HEK293T (cell line): ENCODE measurements at regions of chr13 and their contacts with region 1.

Region 1: GRCh38 chr13:29923554-29924481 is 73.4 kb upstream of the UBL3 start:
- DNase-seq: peak; percentile 81

Region 2: DNA sequence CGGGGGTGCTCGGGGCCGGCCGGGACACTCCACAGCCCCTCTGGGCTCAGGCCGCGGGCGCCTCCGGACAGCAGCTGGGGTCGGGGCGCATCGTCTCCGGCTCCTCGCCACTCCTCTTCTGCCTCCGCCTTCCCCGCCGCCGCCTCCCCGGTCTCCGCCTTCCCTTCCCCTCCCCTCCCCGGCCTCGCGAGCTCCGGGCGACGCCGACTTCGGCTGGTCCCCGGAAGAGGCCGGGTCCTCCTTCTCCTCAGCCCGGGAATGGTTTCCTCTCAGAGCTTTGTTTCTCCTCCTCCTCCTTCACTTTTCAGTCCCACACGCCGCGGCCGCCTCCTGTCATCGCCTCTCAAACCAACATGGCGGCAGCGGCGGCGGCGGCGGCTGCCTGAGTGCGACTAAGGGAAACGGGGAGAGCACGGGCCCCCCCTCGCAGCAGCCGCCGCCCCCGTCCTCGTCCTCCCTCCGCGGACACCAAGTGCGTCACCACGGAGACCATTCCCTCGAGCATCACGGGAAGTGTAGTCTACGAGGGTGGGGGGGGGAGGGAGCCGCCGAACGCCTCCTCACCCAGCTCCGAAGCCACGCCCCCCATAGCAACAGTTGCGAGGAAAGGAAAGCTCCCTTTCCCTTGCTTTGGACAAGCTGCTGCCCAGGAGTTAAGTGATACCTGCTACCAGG is 73.5 kb before region 1 on chr13 and contains the start of gene UBL3:
- CTCF ChIA-PET with region 1: interaction called, 11 read pairs
- POLR2A ChIA-PET with region 1: interaction called, 16 read pairs
- DNase-seq: peak; percentile 95

Region 3: GRCh38 chr13:29911781-29912418 is 11.9 kb before region 1 on chr13:
- CTCF ChIA-PET with region 1: interaction called, 17 read pairs
- POLR2A ChIA-PET with region 1: interaction called, 5 read pairs
- DNase-seq: no peak

Region 4: DNA sequence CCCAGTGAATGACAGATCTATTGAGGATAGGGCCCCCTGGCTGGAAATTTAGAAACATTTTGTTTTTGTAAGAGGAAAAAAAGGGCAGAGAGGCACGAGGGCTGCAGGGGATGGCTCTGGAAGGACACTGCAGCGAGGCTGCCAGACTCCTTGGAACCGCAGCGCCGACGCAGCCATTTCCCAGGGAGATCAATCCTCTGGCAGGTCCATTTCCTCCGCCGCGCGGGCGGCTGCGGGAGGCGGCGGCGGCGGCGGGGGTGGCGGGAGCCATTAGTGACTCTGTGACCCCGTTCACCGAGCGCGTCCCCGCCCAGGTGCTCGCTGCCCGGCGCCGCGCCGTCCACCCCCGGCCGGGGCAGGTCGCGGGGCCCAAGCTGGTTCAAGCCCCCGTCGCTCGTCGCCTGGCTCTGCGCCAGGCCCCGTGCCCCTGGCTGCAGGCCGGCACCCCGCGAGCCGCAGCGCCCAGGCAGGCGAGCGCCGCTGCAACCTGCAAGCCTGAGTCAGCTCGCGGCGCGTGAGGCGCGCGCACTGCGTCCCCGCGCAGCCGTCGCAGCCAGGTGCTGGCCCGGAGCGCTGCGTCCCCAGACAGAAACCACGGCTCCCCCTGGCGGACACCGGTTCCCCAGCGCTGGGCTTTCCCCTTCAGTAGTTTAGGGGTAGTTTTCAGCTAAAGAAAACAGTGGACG is 190.9 kb after region 1 on chr13:
- CTCF ChIA-PET with region 1: interaction called, 11 read pairs
- POLR2A ChIA-PET with region 1: interaction called, 5 read pairs
- DNase-seq: peak; percentile 88